ENCODE measurements at regions of chr6 and their contacts with region 1.

Region 1: DNA sequence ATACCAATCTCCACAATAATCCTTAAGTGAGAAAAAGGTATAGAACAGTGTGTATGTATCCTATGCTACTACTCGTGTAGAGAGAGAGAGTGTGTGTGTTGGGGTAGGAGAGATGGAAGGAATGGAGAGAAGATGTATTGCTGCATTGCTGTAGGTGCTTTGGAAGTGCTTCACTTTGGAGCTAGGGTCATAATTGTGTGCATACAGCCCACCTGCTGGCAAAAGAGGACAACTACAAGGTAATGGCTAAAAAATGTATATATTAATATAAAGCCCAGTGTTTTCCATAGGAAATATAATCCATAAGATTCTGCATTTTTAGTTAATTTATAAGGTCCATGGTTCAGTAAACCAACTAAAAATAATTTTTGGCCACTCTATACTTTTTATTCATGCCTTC is 36.1 kb downstream of the SERAC1 start:
- DNase-seq: peak; percentile 53
- H3K4me3 ChIP-seq: no peak overlapping the region
- H3K27ac ChIP-seq: no peak overlapping the region
- H3K4me1 ChIP-seq: no peaks in the 10 kb centered on the region
- H3K27me3 ChIP-seq: no peaks in the 10 kb centered on the region
- CTCF ChIP-seq: peak; percentile 49
- POLR2A ChIP-seq: no peak

Region 2: GRCh38 chr6:158149641-158150040 is 17.7 kb after region 1 on chr6:
- CTCF ChIA-PET with region 1: interaction called, 22 read pairs
- POLR2A ChIA-PET with region 1: no interaction called
- dilution Hi-C with region 1: no loop called
- intact Hi-C with region 1: no loop called
- DNase-seq: peak; percentile 24
- H3K4me3 ChIP-seq: no peak overlapping the region
- H3K27ac ChIP-seq: no peak overlapping the region
- H3K4me1 ChIP-seq: no peaks in the 10 kb centered on the region
- H3K27me3 ChIP-seq: no peaks in the 10 kb centered on the region
- CTCF ChIP-seq: no peak
- POLR2A ChIP-seq: no peak

Measured in endothelial cell of umbilical vein (primary cell).